ENCODE measurements at regions of chr7 and their contacts with region 1.

Region 1: GRCh38 chr7:39016604-39017003 is 38.9 kb downstream of the POU6F2 start:
- DNase-seq: no peak
- H3K4me3 ChIP-seq: no peak overlapping the region
- H3K27ac ChIP-seq: no peak overlapping the region
- H3K4me1 ChIP-seq: no peaks in the 10 kb centered on the region
- H3K27me3 ChIP-seq: no peaks in the 10 kb centered on the region
- CTCF ChIP-seq: no peak

Region 2: DNA sequence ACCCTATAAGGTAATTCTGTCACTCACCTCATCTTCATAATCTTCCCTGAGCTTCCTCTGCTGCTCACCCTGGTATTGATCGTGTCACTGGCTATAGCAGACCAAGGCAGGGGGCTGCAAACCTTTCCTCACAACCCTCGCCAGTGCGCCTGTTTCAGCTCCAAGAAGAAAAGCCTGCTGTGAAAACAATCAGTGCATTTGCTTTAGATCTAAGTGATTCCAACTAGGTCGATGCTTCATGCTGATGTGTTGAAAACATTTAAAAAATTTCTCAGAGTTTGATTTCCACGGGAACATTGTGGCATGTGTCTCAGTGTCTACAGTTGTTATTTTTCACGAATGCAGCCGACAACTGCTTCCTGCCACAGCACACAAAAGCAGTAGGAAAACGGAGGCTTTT is 11.6 kb before region 1 on chr7:
- intact Hi-C with region 1: loop called (anchors 2 kb)
- DNase-seq: no peak
- H3K4me3 ChIP-seq: no peak overlapping the region
- H3K27ac ChIP-seq: no peak overlapping the region
- H3K4me1 ChIP-seq: peaks cover 0 to 4% of the 10 kb centered on the region in 2 donors
- H3K27me3 ChIP-seq: no peaks in the 10 kb centered on the region
- CTCF ChIP-seq: no peak

Measured in ascending aorta (tissue), 2 donors.